Sciatic nerve (tissue), 2 donors: ENCODE measurements at regions of chr12 and their contacts with region 1.

Region 1: DNA sequence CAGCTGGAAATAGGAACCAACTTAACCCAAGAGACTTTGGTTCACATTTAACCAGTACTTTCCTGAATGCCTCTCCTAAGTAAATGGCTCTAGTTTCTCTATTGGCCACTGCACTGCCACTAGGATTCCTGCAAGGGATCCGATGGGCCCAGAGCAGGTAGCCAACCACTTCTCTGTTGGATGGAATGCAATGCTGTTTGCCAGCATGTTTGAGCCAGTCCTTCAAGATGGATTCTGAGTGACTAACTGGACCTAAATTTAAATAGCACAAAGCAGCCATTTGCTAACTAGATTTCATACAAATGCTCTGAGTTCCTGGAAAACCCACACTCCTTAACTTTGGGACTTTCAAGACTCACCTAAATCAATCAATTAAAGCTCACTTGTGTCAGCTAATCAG is 9.5 kb upstream of the CLEC2D start:
- DNase-seq: no peak
- ATAC-seq: no peak

Region 2: GRCh38 chr12:9590441-9590840 is 69.6 kb before region 1 on chr12:
- intact Hi-C with region 1: loop called (anchors 2 kb)
- DNase-seq: no peak
- ATAC-seq: no peak